ENCODE measurements at regions of chr17 and their contacts with region 1.

Region 1: GRCh38 chr17:7252176-7253043 is at the start of gene ELP5:
- DNase-seq: peak; percentile 64 to 99 (median 80)
- ATAC-seq: peak; percentile 39
- H3K4me3 ChIP-seq: peak within 1 kb of the TSS; percentile 71
- H3K4me3 Mint-ChIP-seq: peak within 1 kb of the TSS; percentile 94
- H3K27ac ChIP-seq: peak within 1 kb of the TSS; percentile 99
- H3K27ac Mint-ChIP-seq: peak within 1 kb of the TSS; percentile 100
- H3K4me1 ChIP-seq: peaks cover 36% of the 10 kb centered on the region
- H3K4me1 Mint-ChIP-seq: peaks cover 45% of the 10 kb centered on the region
- H3K27me3 ChIP-seq: no peaks in the 10 kb centered on the region
- H3K27me3 Mint-ChIP-seq: no peaks in the 10 kb centered on the region
- CTCF ChIP-seq: peak; percentile 28
- total RNA-seq, gene ELP5: 20.1 to 21.3 TPM

Region 2: GRCh38 chr17:7204336-7204735 is 48.1 kb before region 1 on chr17:
- CTCF ChIA-PET with region 1: no interaction called
- POLR2A ChIA-PET with region 1: no interaction called
- intact Hi-C with region 1: no loop called
- DNase-seq: peak in 2 of 14 experiments; percentile 12 to 70
- ATAC-seq: no peak
- H3K4me3 ChIP-seq: peak overlapping the region; percentile 66
- H3K4me3 Mint-ChIP-seq: peak overlapping the region; percentile 83
- H3K27ac ChIP-seq: peak overlapping the region; percentile 86 to 95
- H3K27ac Mint-ChIP-seq: peak overlapping the region; percentile 87
- H3K4me1 ChIP-seq: peaks cover 31% of the 10 kb centered on the region
- H3K4me1 Mint-ChIP-seq: peaks cover 35% of the 10 kb centered on the region
- H3K27me3 ChIP-seq: no peaks in the 10 kb centered on the region
- H3K27me3 Mint-ChIP-seq: no peaks in the 10 kb centered on the region
- CTCF ChIP-seq: no peak

Region 3: GRCh38 chr17:7214300-7215135 is 37.9 kb before region 1 on chr17:
- CTCF ChIA-PET with region 1: interaction called, 4 read pairs
- POLR2A ChIA-PET with region 1: interaction called, 10 read pairs
- intact Hi-C with region 1: loop called in 1 of 2 experiments (anchors 5 kb)
- DNase-seq: peak; percentile 97 to 100 (median 99)
- ATAC-seq: peak; percentile 72
- H3K4me3 ChIP-seq: peak overlapping the region; percentile 64
- H3K4me3 Mint-ChIP-seq: peak overlapping the region; percentile 93
- H3K27ac ChIP-seq: peak overlapping the region; percentile 85 to 99
- H3K27ac Mint-ChIP-seq: peak overlapping the region; percentile 93
- H3K4me1 ChIP-seq: peaks cover 70% of the 10 kb centered on the region
- H3K4me1 Mint-ChIP-seq: peaks cover 70% of the 10 kb centered on the region
- H3K27me3 ChIP-seq: no peaks in the 10 kb centered on the region
- H3K27me3 Mint-ChIP-seq: peaks cover 5% of the 10 kb centered on the region
- CTCF ChIP-seq: peak; percentile 56

Region 4: GRCh38 chr17:7219812-7220581 is 32.4 kb before region 1 on chr17 and contains the starts of genes ACADVL and DLG4:
- CTCF ChIA-PET with region 1: interaction called, 4 read pairs
- POLR2A ChIA-PET with region 1: interaction called, 10 read pairs
- intact Hi-C with region 1: loop called in 1 of 2 experiments (anchors 5 kb)
- DNase-seq: peak; percentile 53 to 86 (median 74)
- ATAC-seq: peak; percentile 50
- H3K4me3 ChIP-seq: peak within 1 kb of the TSS; percentile 70
- H3K4me3 Mint-ChIP-seq: peak within 1 kb of the TSS; percentile 95
- H3K27ac ChIP-seq: peak within 1 kb of the TSS; percentile 75 to 79
- H3K27ac Mint-ChIP-seq: peak within 1 kb of the TSS; percentile 76
- H3K4me1 ChIP-seq: peaks cover 61% of the 10 kb centered on the region
- H3K4me1 Mint-ChIP-seq: peaks cover 54% of the 10 kb centered on the region
- H3K27me3 ChIP-seq: no peaks in the 10 kb centered on the region
- H3K27me3 Mint-ChIP-seq: no peaks in the 10 kb centered on the region
- CTCF ChIP-seq: no peak
- total RNA-seq, gene ACADVL: 237 to 257 TPM
- total RNA-seq, gene DLG4: 10.2 to 11.0 TPM